Panc1 (cell line): ENCODE measurements at regions of chr1 and their contacts with region 1.

Region 1: GRCh38 chr1:6962996-6963911 is 178.0 kb downstream of the CAMTA1 start:
- DNase-seq: peak; percentile 4
- ATAC-seq: peak; percentile 53
- H3K4me3 ChIP-seq: peak overlapping the region in 1 of 2 experiments; percentile 16; a peak in 1 of 4 replicates
- H3K27ac ChIP-seq: no peak overlapping the region
- H3K4me1 ChIP-seq: peaks cover 23% of the 10 kb centered on the region
- H3K27me3 ChIP-seq: no peaks in the 10 kb centered on the region
- CTCF ChIP-seq: no peak

Region 2: DNA sequence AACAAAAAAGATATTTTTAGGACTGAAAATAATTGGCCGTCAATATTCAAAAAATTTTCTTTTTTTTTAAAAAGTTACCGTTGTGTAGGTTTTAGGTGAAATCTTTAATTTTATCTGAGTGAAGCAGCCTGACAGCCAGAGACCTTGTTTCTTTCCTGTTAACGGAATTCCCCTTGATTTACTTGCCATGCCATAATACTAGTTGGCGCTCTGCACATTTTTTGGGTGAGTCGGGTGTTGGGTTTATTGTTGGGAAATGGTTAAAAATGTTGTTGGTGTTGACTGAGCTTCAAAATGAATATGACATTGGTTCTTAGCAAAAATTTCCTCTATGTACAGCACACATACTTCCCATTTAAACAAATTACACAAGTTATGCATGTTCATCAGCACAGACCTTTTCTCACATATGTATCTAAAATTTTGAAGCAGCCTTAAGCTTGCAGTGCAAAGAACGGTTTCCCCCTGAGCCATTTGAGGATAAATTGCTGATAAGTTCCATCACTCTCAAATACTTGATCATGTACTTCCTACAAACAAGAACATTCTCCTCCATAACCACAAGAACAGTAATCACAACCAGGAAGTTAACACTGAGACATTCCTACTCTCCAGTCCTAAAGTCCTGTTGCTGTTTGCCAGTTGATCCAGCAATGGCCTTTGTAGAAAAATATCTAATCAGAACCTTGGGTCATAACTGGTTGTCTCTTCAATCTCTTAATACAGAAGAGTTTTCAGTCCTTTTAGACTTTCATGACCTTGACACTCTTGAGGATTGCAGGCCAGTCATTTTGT is 143.8 kb before region 1 on chr1:
- CTCF ChIA-PET with region 1: no interaction called
- POLR2A ChIA-PET with region 1: no interaction called
- in situ Hi-C with region 1: no loop called
- intact Hi-C with region 1: no loop called
- DNase-seq: no peak
- ATAC-seq: no peak
- H3K4me3 ChIP-seq: no peak overlapping the region
- H3K27ac ChIP-seq: no peak overlapping the region
- H3K4me1 ChIP-seq: 0 out of 2 replicates have a peak, but pooled peaks cover 2% of the 10 kb centered on the region
- H3K27me3 ChIP-seq: no peaks in the 10 kb centered on the region
- CTCF ChIP-seq: no peak

Region 3: DNA sequence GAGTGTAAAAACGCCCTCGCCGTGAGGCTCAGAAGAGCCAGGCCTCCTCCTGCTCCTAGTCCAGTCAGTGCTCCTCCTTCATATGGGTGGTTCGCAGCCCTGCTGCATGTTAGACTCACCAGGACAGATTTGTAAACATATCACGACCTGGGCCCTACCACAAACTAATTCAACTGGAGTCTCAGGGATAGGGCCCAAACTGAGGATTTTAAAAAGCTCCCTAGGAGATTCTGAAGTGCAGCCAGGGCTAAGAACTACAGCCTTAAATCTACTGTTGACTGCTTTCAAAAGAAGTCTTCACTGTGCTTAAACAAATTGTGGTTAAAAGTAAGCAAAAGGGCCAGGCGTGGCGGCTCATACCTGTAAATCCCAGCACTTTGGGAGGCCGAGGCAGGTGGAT is 121.0 kb before region 1 on chr1:
- CTCF ChIA-PET with region 1: no interaction called
- POLR2A ChIA-PET with region 1: interaction called, 17 read pairs
- in situ Hi-C with region 1: no loop called
- intact Hi-C with region 1: no loop called
- DNase-seq: no peak
- ATAC-seq: no peak
- H3K4me3 ChIP-seq: no peak overlapping the region
- H3K27ac ChIP-seq: no peak overlapping the region
- H3K4me1 ChIP-seq: no peaks in the 10 kb centered on the region
- H3K27me3 ChIP-seq: no peaks in the 10 kb centered on the region
- CTCF ChIP-seq: no peak

Region 4: DNA sequence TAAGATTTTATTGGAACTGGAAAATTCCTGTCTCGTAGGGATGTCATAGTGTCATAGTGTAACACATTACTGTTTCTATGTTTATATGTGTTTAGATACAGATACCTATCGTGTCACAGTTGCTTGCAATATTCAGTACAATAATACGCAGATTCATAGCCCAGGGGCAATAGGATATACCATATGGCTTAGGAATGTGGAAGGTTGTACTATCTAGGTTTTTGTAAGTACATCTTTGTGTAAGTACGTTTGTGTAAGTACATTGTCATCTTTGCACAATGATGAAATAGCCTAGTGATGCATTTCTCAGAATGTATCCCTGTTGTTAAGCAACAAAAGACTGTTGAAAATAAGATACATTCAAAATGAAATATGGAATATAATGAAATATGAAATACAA is 109.1 kb before region 1 on chr1:
- CTCF ChIA-PET with region 1: no interaction called
- POLR2A ChIA-PET with region 1: no interaction called
- in situ Hi-C with region 1: no loop called
- intact Hi-C with region 1: no loop called
- DNase-seq: no peak
- ATAC-seq: no peak
- H3K4me3 ChIP-seq: no peak overlapping the region
- H3K27ac ChIP-seq: no peak overlapping the region
- H3K4me1 ChIP-seq: no peaks in the 10 kb centered on the region
- H3K27me3 ChIP-seq: no peaks in the 10 kb centered on the region
- CTCF ChIP-seq: no peak

Region 5: DNA sequence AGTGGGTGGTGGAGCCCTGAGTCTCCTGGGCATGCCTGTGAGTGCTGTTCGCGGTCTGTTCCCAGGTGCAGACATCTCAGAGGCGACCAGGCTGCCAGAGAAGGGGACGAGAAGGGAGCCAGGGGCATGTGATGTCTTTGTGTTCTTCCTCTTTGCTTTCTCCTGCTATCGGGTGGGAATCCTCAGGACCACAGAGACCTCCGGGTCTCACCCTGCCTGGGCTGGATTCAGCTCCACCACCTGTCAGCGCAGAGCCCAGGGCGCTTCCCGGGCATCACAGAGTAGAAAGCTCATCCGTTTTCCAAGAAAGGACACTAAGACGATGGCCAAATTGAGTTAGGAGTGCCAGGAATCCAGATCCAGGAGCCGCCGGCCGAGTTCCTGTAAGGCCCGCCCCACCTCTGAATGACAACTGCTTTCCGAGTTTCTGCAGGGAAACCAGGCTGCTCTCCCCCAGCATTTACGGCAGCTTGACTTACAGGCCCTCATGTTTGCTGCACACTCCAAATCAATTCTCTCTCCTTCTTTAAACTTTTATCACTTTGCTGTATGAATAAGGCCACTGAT is 47.2 kb before region 1 on chr1:
- CTCF ChIA-PET with region 1: interaction called, 10 read pairs
- POLR2A ChIA-PET with region 1: no interaction called
- in situ Hi-C with region 1: no loop called
- intact Hi-C with region 1: no loop called
- DNase-seq: no peak
- ATAC-seq: no peak
- H3K4me3 ChIP-seq: no peak overlapping the region
- H3K27ac ChIP-seq: no peak overlapping the region
- H3K4me1 ChIP-seq: no peaks in the 10 kb centered on the region
- H3K27me3 ChIP-seq: no peaks in the 10 kb centered on the region
- CTCF ChIP-seq: no peak